ENCODE measurements at regions of chr10 and their contacts with region 1.

Region 1: DNA sequence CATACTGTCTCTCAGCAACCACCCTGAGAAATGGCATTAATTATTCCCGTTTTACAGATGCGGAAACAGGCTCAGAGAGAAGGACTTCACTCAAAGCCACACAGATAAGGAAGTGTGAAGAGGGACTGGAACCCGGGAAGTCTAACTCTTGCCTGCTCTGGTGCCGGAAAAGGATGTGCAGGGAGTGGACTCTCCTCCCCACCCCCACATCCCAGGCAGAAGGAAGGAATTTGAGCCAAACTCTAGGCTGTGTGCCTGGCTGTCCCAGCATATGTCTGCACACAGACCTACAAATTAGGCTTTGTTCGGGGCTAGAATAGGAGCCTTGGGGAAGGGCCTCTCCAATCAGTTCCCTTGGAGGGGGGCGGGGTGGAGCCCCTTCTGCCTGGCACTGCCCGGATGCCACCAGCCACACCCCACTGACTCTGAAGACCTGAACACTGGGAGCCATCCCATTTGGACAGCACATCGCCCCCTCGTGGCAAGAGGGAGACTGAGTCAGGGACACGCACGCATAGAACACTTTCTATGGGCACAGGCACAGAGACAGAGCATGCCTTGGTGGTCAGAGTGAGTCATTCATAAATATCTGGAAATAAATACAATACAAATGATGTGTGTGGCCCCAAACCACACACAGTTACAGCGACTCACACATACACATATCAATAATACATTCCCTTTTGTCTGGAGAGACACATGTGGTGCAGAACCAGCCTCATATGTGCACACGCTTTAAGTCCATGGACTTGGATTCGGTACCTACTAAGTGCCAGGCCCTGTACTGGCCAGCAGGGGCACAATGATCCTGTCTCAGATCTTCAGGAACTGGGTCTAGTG is 13.1 kb downstream of the LZTS2 start:
- DNase-seq: peak; percentile 79
- CTCF ChIP-seq: peak; percentile 93

Region 2: GRCh38 chr10:100803492-100803891 is 209.3 kb before region 1 on chr10:
- CTCF ChIA-PET with region 1: no interaction called
- POLR2A ChIA-PET with region 1: no interaction called
- DNase-seq: no peak
- CTCF ChIP-seq: no peak

Region 3: GRCh38 chr10:100912605-100913469 is 99.9 kb before region 1 on chr10 and contains the start of gene SLF2:
- CTCF ChIA-PET with region 1: interaction called, 15 read pairs
- POLR2A ChIA-PET with region 1: no interaction called
- DNase-seq: peak; percentile 99
- CTCF ChIP-seq: no peak

Region 4: GRCh38 chr10:100969187-100970075 is 43.3 kb before region 1 on chr10 and contains the start of gene SEMA4G:
- CTCF ChIA-PET with region 1: interaction called, 13 read pairs
- POLR2A ChIA-PET with region 1: no interaction called
- DNase-seq: peak; percentile 74
- CTCF ChIP-seq: peak; percentile 70

Region 5: DNA sequence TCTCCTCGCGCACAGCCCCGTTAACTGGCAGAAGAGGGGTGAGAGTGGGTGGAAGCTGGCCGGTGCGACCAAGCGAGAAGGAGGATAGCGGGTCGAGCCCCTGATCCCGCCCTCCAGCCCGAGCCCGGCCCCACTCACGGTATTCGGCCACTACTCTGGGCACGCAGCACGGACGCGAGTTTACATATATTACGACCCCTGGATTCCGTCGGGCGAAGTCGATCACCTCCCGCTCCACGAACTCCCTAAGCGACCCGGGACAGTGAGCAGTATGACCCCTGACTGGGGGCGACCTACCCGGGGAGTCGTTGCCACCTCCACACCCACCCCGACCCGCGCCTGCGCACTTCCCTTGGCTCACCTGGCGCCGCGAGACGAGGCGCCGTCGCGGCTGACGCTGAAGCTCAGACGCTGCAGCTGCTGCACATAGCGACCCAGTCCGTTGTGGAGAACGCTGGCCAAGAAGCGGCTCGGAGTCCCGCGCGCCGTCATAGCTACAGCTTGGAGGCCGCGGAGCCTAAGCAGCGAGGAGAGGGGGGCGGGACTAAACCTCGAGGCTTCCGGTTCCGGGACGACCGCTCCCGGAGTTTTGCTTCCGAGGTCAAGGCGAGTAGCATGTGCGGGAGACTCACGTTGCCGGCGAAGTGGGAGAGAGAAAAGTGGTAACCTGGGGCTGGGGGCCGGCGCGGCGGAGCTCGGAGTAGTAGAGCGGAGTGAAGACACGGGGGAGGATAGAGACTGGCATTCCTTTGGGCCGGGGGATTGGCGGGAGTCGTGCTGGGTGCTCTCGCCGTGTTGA is 25.6 kb before region 1 on chr10 and contains the starts of genes MRPL43 and TWNK:
- CTCF ChIA-PET with region 1: interaction called, 13 read pairs
- POLR2A ChIA-PET with region 1: no interaction called
- DNase-seq: peak; percentile 92
- CTCF ChIP-seq: no peak

Region 6: DNA sequence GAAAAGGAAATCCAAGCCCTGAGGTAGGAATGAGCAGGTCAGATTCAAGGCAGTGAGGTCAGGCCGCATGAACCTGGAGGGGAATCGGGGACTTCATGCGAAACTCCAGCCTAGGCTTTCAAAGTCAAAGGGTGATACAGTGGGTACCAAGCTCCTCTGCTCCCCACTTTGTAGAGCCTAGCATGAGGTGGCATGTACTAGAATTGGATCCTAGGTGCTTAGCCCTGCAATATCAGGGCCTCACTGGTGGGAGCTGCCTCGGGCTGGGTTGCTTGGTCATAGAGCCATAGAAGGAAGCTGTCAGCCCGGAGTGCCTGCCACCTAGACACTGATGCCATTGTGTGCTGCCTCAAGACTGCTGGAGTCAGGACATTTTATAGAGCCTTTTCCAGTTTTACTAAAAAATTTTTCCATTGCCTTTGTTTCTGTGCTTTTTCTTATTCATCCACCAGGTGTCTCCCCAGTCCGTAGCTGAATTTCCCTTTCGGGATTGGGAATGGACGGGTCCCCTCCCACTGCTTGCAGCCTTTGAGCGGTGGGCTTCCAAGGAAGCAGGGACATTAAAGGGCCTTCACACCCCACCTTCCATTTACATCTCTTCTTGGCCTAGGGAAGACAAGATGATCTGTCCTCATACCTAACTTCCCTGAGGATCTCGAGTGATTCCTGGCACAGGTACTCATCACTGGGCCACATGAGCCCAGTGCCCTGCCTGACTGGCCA is 18.6 kb before region 1 on chr10:
- CTCF ChIA-PET with region 1: interaction called, 101 read pairs
- POLR2A ChIA-PET with region 1: no interaction called
- DNase-seq: no peak
- CTCF ChIP-seq: peak; percentile 23

Region 7: GRCh38 chr10:100998991-100999741 is 13.6 kb before region 1 on chr10:
- CTCF ChIA-PET with region 1: interaction called, 101 read pairs
- POLR2A ChIA-PET with region 1: no interaction called
- DNase-seq: peak; percentile 92
- CTCF ChIP-seq: peak; percentile 77

Region 8: DNA sequence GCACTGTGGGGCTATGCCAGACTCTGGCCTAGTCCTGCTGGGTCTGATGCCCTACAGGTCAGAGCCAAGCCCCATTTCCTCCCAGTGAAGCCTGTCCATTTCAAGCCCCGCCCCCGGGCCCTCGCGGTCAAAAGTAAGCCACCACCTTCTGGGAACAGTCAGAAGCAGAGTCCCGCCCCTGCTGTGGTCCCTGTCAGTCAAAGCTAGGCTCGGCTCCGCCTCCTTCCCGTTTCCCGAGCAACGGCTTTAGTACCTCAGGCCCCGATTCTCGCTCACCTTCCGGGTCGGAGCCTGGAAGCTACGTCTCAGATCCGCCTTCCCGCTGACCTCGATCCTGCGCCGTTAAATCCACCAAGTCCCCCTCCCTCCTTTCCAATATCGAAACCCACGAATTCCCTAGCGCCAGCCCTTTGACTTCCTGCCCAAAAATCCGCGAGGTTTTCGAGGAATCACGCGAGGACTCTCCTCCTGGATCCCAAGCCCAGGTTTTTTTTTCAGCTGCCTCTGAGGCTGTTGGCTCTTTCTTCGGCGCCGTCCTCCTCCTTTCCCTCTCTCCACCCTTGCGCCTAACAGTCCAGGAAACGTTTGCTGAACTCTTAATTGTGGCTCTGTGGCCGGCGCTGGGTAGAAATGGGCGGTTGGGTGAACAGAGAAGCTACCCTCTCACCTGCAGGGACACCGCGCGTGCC is 30.1 kb after region 1 on chr10:
- CTCF ChIA-PET with region 1: interaction called, 18 read pairs
- POLR2A ChIA-PET with region 1: no interaction called
- DNase-seq: peak; percentile 95
- CTCF ChIP-seq: no peak

Region 9: DNA sequence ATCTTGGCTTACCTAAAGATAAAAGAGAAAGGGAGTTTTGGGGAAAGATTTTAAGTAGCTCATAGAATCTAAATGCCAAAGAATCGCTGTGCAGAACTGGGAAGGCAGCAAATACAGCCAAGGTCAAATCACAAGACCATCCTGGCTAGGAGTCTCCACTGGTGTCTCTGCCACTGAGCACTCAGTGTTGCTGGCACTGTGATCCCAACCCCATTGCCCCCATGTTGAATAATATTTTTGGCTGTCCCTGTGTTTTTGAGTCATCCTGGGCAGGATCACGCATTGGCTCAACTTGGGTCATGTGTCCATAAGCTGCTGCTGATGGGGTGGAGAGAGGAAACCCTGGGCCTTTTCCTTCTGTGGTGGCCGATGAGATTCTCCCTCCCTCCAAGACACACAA is 139.6 kb after region 1 on chr10:
- CTCF ChIA-PET with region 1: no interaction called
- POLR2A ChIA-PET with region 1: no interaction called
- DNase-seq: no peak
- CTCF ChIP-seq: no peak